CD4-positive, alpha-beta memory T cell (primary cell): ENCODE measurements at regions of chr7 and their contacts with region 1.

Region 1: GRCh38 chr7:116211006-116211912 is 920 bp downstream of the TES start:
- DNase-seq: peak; percentile 80 to 93 (median 85)
- H3K4me3 ChIP-seq: peak overlapping the region; percentile 62 to 82
- H3K4me3 Mint-ChIP-seq: peak overlapping the region; percentile 93 to 98 (median 98)
- H3K27ac ChIP-seq: peak overlapping the region; percentile 92
- H3K27ac Mint-ChIP-seq: peak overlapping the region; percentile 96 to 99 (median 98)
- H3K4me1 ChIP-seq: peaks cover 56% of the 10 kb centered on the region
- H3K4me1 Mint-ChIP-seq: peaks cover 49 to 62% (median 56%) of the 10 kb centered on the region in 4 donors
- H3K27me3 ChIP-seq: no peaks in the 10 kb centered on the region
- H3K27me3 Mint-ChIP-seq: no peaks in the 10 kb centered on the region

Region 2: GRCh38 chr7:114922016-114922651 is 1289.1 kb before region 1 on chr7 and contains the start of gene MDFIC:
- CTCF ChIA-PET with region 1: no interaction called
- POLR2A ChIA-PET with region 1: interaction called, 5 read pairs
- intact Hi-C with region 1: loop called (anchors 10 kb)
- DNase-seq: peak; percentile 59 to 75 (median 63)
- H3K4me3 ChIP-seq: peak within 1 kb of the TSS; percentile 59 to 93
- H3K4me3 Mint-ChIP-seq: peak within 1 kb of the TSS; percentile 95 to 99 (median 98)
- H3K27ac ChIP-seq: peak within 1 kb of the TSS; percentile 90
- H3K27ac Mint-ChIP-seq: peak within 1 kb of the TSS; percentile 91 to 99 (median 96)
- H3K4me1 ChIP-seq: peaks cover 53% of the 10 kb centered on the region
- H3K4me1 Mint-ChIP-seq: peaks cover 43 to 75% (median 52%) of the 10 kb centered on the region in 4 donors
- H3K27me3 ChIP-seq: no peaks in the 10 kb centered on the region
- H3K27me3 Mint-ChIP-seq: peaks cover 0 to 1% of the 10 kb centered on the region in 2 donors
- total RNA-seq, gene MDFIC: 68.1 to 78.0 TPM

Region 3: GRCh38 chr7:116195451-116195850 is 15.8 kb before region 1 on chr7:
- CTCF ChIA-PET with region 1: interaction called, 12 read pairs
- POLR2A ChIA-PET with region 1: interaction called, 49 read pairs
- intact Hi-C with region 1: no loop called
- DNase-seq: no peak
- H3K4me3 ChIP-seq: no peak overlapping the region
- H3K4me3 Mint-ChIP-seq: no peak overlapping the region
- H3K27ac ChIP-seq: no peak overlapping the region
- H3K27ac Mint-ChIP-seq: no peak overlapping the region
- H3K4me1 ChIP-seq: no peaks in the 10 kb centered on the region
- H3K4me1 Mint-ChIP-seq: no peaks in the 10 kb centered on the region
- H3K27me3 ChIP-seq: no peaks in the 10 kb centered on the region
- H3K27me3 Mint-ChIP-seq: peaks cover 4% of the 10 kb centered on the region in 2 donors

Region 4: GRCh38 chr7:116224492-116225098 is 13.3 kb after region 1 on chr7:
- CTCF ChIA-PET with region 1: interaction called, 118 read pairs
- POLR2A ChIA-PET with region 1: interaction called, 96 read pairs
- intact Hi-C with region 1: loop called (anchors 1 kb)
- DNase-seq: peak in 2 of 5 donors; percentile 21 to 57
- H3K4me3 ChIP-seq: no peak overlapping the region
- H3K4me3 Mint-ChIP-seq: peak overlapping the region; percentile 11 to 83 (median 64)
- H3K27ac ChIP-seq: no peak overlapping the region
- H3K27ac Mint-ChIP-seq: peak overlapping the region; percentile 38 to 79 (median 74)
- H3K4me1 ChIP-seq: peaks cover 93% of the 10 kb centered on the region
- H3K4me1 Mint-ChIP-seq: peaks cover 74 to 93% (median 80%) of the 10 kb centered on the region in 4 donors
- H3K27me3 ChIP-seq: no peaks in the 10 kb centered on the region
- H3K27me3 Mint-ChIP-seq: no peaks in the 10 kb centered on the region

Region 5: DNA sequence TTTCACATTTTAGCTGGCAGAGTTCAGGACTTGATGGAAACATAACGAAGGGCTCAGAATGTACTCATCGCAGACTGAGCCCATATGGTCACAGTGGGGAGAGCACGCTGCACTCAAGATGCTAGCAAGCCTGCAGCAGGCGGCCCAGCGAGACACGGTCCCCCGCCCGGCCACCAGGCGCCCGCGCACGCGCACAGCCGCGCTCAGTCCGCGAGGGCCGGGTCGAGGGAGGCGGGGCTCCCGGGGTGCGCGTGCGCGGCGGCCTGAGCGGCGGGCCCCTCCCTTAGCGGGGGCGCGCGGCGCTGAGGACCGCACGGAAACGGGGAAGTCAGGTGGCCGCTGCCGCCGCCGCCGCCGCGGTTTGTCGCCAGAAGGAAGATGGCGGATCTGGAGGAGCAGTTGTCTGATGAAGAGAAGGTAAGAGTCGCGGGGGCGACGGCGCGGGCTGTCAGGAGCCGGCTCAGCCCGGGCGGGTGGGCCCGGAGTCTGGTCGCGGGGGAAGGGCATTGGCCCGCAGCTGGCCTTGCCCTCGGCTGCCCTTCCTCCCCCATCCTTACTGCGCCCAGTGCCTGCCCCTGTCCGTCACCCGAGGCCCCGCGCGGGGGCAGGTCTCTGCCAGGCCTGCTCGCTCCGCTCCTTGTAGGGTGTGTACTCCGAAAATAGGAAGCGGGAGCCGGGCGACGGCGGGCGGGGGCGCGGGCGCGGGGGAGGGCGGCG is 651.1 kb after region 1 on chr7 and contains the start of gene CAPZA2:
- CTCF ChIA-PET with region 1: no interaction called
- POLR2A ChIA-PET with region 1: interaction called, 3 read pairs
- intact Hi-C with region 1: loop called (anchors 2 kb)
- DNase-seq: peak; percentile 90 to 97 (median 95)
- H3K4me3 ChIP-seq: peak within 1 kb of the TSS; percentile 72 to 81
- H3K4me3 Mint-ChIP-seq: peak within 1 kb of the TSS; percentile 93 to 99 (median 97)
- H3K27ac ChIP-seq: peak within 1 kb of the TSS; percentile 80
- H3K27ac Mint-ChIP-seq: peak within 1 kb of the TSS; percentile 83 to 98 (median 97)
- H3K4me1 ChIP-seq: peaks cover 47% of the 10 kb centered on the region
- H3K4me1 Mint-ChIP-seq: peaks cover 31 to 56% (median 46%) of the 10 kb centered on the region in 4 donors
- H3K27me3 ChIP-seq: no peaks in the 10 kb centered on the region
- H3K27me3 Mint-ChIP-seq: peaks cover under 1 to 4% of the 10 kb centered on the region in 2 donors
- total RNA-seq, gene CAPZA2: 112 to 116 TPM

Region 6: GRCh38 chr7:118183786-118184564 is 1972.7 kb after region 1 on chr7 and contains the start of gene LSM8:
- CTCF ChIA-PET with region 1: no interaction called
- POLR2A ChIA-PET with region 1: no interaction called
- intact Hi-C with region 1: loop called (anchors 2 kb)
- DNase-seq: peak; percentile 96 to 98 (median 97)
- H3K4me3 ChIP-seq: peak within 1 kb of the TSS; percentile 63 to 96
- H3K4me3 Mint-ChIP-seq: peak within 1 kb of the TSS; percentile 92 to 100 (median 98)
- H3K27ac ChIP-seq: peak within 1 kb of the TSS; percentile 95
- H3K27ac Mint-ChIP-seq: peak within 1 kb of the TSS; percentile 92 to 100 (median 100)
- H3K4me1 ChIP-seq: peaks cover 41% of the 10 kb centered on the region
- H3K4me1 Mint-ChIP-seq: peaks cover 29 to 55% (median 38%) of the 10 kb centered on the region in 4 donors
- H3K27me3 ChIP-seq: no peaks in the 10 kb centered on the region
- H3K27me3 Mint-ChIP-seq: no peaks in the 10 kb centered on the region
- total RNA-seq, gene LSM8: 59.0 to 64.1 TPM